ENCODE measurements at regions of chr15 and their contacts with region 1.

Region 1: DNA sequence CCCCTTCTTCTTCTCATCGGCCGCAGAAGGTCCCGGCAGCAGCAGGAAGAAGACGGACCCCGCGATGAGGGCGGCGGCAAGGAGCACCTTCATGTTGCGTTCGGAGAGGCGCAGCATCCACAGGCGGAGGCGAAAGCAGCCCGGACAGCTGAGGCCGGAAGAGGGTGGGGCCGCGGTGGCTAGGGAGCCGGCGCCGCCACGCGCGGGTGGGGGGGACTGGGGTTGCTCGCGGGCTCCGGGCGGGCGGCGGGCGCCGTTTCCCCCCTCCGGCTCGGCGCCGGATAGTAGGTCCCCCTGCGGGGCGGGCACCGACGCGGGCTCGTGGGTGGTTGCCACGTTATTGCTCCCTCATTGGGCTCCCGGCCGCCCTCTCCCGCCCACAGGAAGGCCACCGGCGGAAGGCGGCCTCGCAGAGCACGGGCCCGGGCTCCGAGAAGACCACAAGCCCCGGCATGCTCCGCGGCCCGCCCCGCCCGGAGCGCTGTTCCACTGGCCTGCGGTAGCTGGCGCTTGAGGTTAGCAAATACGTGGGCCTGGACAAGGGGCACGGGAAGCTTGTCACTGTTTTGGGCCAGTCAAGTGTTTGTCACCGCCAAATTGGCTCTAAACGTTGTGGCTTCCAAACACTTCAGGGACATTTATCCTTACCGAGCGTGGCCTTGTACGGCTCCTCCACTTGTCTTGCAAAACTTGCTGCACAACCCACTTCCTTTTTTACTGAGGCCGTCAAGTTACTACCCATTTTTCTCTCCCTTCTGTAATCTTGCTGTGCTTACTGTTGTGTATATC is at the start of gene PPIB:
- DNase-seq: peak; percentile 98
- H3K4me3 ChIP-seq: peak within 1 kb of the TSS; percentile 77 to 96 (median 94)
- H3K27ac ChIP-seq: peak within 1 kb of the TSS; percentile 70
- H3K4me1 ChIP-seq: peaks cover 16% of the 10 kb centered on the region
- H3K27me3 ChIP-seq: no peaks in the 10 kb centered on the region
- CTCF ChIP-seq: peak; percentile 39 to 59
- POLR2A ChIP-seq: peak; percentile 95
- total RNA-seq, gene PPIB: 818 and 840 TPM in 2 replicates

Region 2: GRCh38 chr15:64387562-64388168 is 224.6 kb after region 1 on chr15 and contains the start of gene TRIP4:
- CTCF ChIA-PET with region 1: interaction called, 12 read pairs
- POLR2A ChIA-PET with region 1: interaction called, 8 read pairs
- dilution Hi-C with region 1: no loop called
- intact Hi-C with region 1: loop called (anchors 2 kb)
- DNase-seq: peak; percentile 98
- H3K4me3 ChIP-seq: peak within 1 kb of the TSS; percentile 41 to 92 (median 89)
- H3K27ac ChIP-seq: peak within 1 kb of the TSS; percentile 56
- H3K4me1 ChIP-seq: peaks cover 7% of the 10 kb centered on the region
- H3K27me3 ChIP-seq: no peaks in the 10 kb centered on the region
- CTCF ChIP-seq: no peak
- POLR2A ChIP-seq: peak; percentile 94
- total RNA-seq, gene TRIP4: 29.8 and 31.1 TPM in 2 replicates

Measured in endothelial cell of umbilical vein (primary cell).